ENCODE measurements at regions of chr7 and their contacts with region 1.

Region 1: GRCh38 chr7:55593515-55594318 is 21.4 kb upstream of the VOPP1 start:
- DNase-seq: peak; percentile 91
- H3K4me3 Mint-ChIP-seq: no peak overlapping the region
- H3K27ac Mint-ChIP-seq: no peak overlapping the region
- H3K4me1 Mint-ChIP-seq: peaks cover 22% of the 10 kb centered on the region
- H3K27me3 Mint-ChIP-seq: peaks cover 4% of the 10 kb centered on the region

Region 2: GRCh38 chr7:55280031-55280454 is 313.7 kb before region 1 on chr7:
- intact Hi-C with region 1: loop called (anchors 5 kb)
- DNase-seq: peak; percentile 89
- H3K4me3 Mint-ChIP-seq: no peak overlapping the region
- H3K27ac Mint-ChIP-seq: peak overlapping the region; percentile 29
- H3K4me1 Mint-ChIP-seq: peaks cover 2% of the 10 kb centered on the region
- H3K27me3 Mint-ChIP-seq: peaks cover 1% of the 10 kb centered on the region

Region 3: DNA sequence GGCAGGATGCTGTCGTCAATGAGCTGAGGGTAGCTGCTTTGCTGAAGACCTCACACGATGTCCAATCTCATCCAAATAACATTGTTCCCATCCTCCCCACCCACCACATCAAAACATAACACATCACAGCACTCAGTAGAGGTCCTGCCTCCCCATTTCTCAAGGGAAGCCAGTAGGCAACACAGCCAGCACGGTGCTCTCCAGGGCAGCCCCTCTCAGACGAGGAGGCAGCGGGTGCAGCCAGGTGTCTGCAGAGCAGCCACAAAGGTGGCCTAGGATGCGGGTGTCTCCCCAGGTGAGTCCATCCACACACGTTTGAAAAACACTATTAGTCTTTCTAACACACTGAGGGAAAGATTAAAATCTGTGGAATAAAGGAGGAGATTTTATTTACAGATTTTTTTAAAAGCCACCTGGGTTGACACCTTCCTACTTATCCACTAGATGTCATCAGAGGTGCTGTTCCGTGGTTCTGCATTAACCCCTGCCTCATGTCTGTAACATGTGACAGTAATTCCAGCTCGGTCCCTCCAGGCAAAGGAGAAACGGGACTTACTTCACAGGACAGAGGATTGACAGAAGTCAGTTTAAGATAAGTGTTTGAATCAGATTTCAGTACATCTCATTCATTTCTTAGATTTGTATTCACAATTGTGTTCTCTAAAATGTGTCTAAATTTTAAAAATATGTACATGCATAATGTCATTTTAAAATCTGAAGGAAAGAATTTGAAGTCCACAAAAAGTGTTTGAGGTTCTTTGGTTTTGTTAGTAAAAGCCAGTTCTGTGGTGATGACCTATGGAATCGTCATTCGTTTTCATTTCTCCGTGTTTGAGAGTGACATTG is 160.6 kb before region 1 on chr7:
- intact Hi-C with region 1: loop called (anchors 1 kb)
- DNase-seq: peak; percentile 75
- H3K4me3 Mint-ChIP-seq: no peak overlapping the region
- H3K27ac Mint-ChIP-seq: peak overlapping the region; percentile 12
- H3K4me1 Mint-ChIP-seq: peaks cover 14% of the 10 kb centered on the region
- H3K27me3 Mint-ChIP-seq: no peaks in the 10 kb centered on the region

Measured in activated CD4-positive, alpha-beta T cell treated with anti-CD3 and anti-CD28 coated beads, Interleukin-2, amount 10 ng/mL, durations not matched to agents 24 days and 14 days (primary cell).